ENCODE measurements at regions of chr16 and their contacts with region 1.

Region 1: DNA sequence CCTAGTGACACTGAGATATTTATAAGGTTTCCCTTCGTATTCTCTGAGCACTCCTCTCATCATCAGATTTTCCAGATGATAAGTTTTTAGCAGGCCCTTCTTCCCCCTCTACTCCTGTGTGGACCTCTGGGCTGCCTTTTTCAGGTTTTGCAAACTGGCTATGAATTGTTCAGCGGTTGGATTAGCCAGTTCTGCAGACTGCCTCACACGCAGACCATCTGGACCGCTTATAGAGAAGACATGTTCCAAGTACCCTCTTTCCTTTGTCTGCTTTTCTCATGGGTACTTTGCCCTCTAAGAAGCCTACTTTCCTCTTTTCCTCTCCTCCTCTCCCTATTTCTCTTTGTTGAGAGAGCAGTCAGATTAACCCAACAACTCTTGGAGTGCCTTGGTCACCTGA is 111.6 kb downstream of the GRIN2A start:
- DNase-seq: no peak
- H3K4me3 ChIP-seq: no peak overlapping the region
- H3K27ac ChIP-seq: no peak overlapping the region
- H3K4me1 ChIP-seq: no peaks in the 10 kb centered on the region
- H3K27me3 ChIP-seq: no peaks in the 10 kb centered on the region
- CTCF ChIP-seq: no peak
- POLR2A ChIP-seq: no peak

Region 2: DNA sequence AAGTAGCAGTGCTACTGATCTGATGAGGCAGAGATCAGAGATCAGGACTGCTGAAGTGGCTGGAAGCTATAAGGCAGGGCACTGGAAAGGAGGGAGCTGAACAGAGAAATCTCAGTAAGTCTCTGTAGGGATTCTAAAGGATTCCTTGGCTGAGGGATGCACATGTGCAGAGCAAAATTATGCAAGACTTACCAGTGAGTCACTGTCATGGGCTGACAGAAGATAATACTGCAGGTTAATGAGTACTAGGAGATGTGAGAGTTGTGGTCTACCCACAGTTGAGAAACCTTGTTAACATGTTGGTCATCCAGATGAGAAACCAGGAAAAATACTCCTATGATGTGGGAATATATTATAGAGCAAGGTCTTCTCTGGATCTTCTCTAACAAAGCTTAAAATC is 601.1 kb before region 1 on chr16:
- intact Hi-C with region 1: loop called (anchors 5 kb)
- DNase-seq: no peak
- H3K4me3 ChIP-seq: no peak overlapping the region
- H3K27ac ChIP-seq: no peak overlapping the region
- H3K4me1 ChIP-seq: no peaks in the 10 kb centered on the region
- H3K27me3 ChIP-seq: no peaks in the 10 kb centered on the region
- CTCF ChIP-seq: no peak
- POLR2A ChIP-seq: no peak

Region 3: DNA sequence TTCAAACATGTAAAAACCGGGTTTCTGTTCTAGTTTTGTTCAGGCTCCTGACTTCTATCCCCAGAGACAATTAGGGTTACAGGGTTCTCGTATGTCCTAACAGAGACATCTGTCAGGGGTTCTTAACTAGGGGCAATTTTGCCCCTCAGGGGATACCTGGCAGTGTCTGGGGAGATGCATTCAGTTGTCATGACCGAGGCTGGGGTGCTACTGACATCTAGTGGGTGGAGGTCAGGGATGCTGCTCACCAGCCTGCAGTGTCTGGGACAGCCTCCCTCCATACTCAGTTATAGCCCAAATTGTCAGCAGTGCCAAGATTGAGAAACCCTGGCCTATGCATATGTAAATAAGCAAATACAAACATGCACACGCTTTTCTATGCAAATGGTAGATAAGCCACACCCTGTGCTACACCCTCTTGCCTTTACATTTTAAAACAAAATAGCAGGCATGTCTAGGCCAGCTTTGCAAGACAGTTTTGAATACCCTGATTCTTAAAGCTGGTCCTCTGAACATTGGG is 911.2 kb after region 1 on chr16:
- intact Hi-C with region 1: no loop called
- DNase-seq: no peak
- H3K4me3 ChIP-seq: no peak overlapping the region
- H3K27ac ChIP-seq: peak overlapping the region in 1 of 2 donors; percentile 49
- H3K4me1 ChIP-seq: peaks cover 0 to 5% of the 10 kb centered on the region in 2 donors
- H3K27me3 ChIP-seq: no peaks in the 10 kb centered on the region
- CTCF ChIP-seq: no peak
- POLR2A ChIP-seq: no peak